CD14-positive monocyte (primary cell): ENCODE measurements at regions of chr20 and their contacts with region 1.

Region 1: DNA sequence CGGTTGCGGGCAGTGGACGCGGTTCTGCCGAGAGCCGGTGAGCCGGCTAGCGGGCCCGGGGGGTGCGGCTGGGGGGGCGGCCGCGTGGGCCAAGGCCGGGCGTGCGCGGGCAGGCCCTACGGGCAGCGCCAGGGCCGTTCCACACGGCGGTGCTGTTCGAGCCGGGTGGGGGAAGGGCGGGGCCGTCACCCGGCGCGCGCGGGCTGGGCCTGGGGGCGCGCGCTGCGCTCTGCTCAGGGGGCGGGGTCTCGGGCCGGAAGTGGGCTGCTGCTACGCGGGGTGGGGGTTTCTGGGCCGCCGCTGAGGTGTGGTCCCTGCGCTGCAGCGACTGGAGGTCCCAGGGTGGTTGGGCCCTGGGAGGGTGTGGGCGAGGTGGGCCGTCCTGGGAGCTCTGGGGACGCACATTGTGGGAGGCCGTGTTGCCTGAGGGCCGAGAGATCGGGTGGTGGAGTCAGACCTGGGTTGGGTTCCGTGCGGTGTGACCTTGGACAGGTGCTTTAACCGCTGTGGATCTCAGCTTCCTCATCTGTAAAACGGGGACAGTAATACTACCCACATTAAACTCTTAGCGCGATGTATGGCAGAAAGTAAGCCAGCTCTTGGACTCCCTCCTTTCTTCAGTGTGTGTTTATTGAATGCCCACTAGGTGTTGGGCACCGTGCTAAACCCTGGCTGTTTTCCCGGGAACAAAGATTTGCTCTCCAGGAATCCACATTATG is 397 bp downstream of the MAPRE1 start:
- DNase-seq: peak in 2 of 3 donors; percentile 13 to 50
- H3K4me3 ChIP-seq: peak overlapping the region; percentile 87 to 99 (median 90)
- H3K4me3 Mint-ChIP-seq: peak overlapping the region; percentile 94 to 96
- H3K27ac ChIP-seq: peak overlapping the region; percentile 88 to 95
- H3K27ac Mint-ChIP-seq: peak overlapping the region; percentile 94 to 99 (median 98)
- H3K4me1 ChIP-seq: peaks cover 42% of the 10 kb centered on the region in 2 donors
- H3K4me1 Mint-ChIP-seq: peaks cover 39% of the 10 kb centered on the region
- H3K27me3 ChIP-seq: no peaks in the 10 kb centered on the region
- H3K27me3 Mint-ChIP-seq: peaks cover 0 to 4% (median 0%) of the 10 kb centered on the region in 3 donors
- CTCF ChIP-seq: no peak

Region 2: GRCh38 chr20:32357869-32358631 is 462.1 kb before region 1 on chr20 and contains the start of gene ASXL1:
- intact Hi-C with region 1: loop called in 1 of 2 experiments (anchors 10 kb)
- DNase-seq: peak; percentile 90 to 92 (median 91)
- H3K4me3 ChIP-seq: peak within 1 kb of the TSS; percentile 69 to 86 (median 74)
- H3K4me3 Mint-ChIP-seq: peak within 1 kb of the TSS; percentile 96 to 99
- H3K27ac ChIP-seq: peak within 1 kb of the TSS; percentile 91 to 94
- H3K27ac Mint-ChIP-seq: peak within 1 kb of the TSS; percentile 95 to 100 (median 99)
- H3K4me1 ChIP-seq: peaks cover 31 to 41% of the 10 kb centered on the region in 2 donors
- H3K4me1 Mint-ChIP-seq: peaks cover 38% of the 10 kb centered on the region
- H3K27me3 ChIP-seq: no peaks in the 10 kb centered on the region
- H3K27me3 Mint-ChIP-seq: no peaks in the 10 kb centered on the region
- CTCF ChIP-seq: no peak
- polyA plus RNA-seq, gene ASXL1: 1.8 to 47.1 (median 2.8) TPM

Region 3: GRCh38 chr20:32779500-32780211 is 40.5 kb before region 1 on chr20:
- intact Hi-C with region 1: no loop called
- DNase-seq: no peak
- H3K4me3 ChIP-seq: no peak overlapping the region
- H3K4me3 Mint-ChIP-seq: no peak overlapping the region
- H3K27ac ChIP-seq: no peak overlapping the region
- H3K27ac Mint-ChIP-seq: no peak overlapping the region
- H3K4me1 ChIP-seq: no peaks in the 10 kb centered on the region
- H3K4me1 Mint-ChIP-seq: peaks cover 6% of the 10 kb centered on the region
- H3K27me3 ChIP-seq: no peaks in the 10 kb centered on the region
- H3K27me3 Mint-ChIP-seq: peaks cover 0 to 2% (median 0%) of the 10 kb centered on the region in 3 donors
- CTCF ChIP-seq: no peak